Common myeloid progenitor, CD34-positive (primary cell): ENCODE measurements at regions of chr17 and their contacts with region 1.

Region 1: GRCh38 chr17:29617125-29617480 is 5.6 kb downstream of the CORO6 start:
- DNase-seq: peak; percentile 89 to 94 (median 94)
- H3K4me3 ChIP-seq: peak overlapping the region in 6 of 7 experiments; percentile 9 to 82 (median 58)
- H3K27ac ChIP-seq: no peak overlapping the region
- H3K4me1 ChIP-seq: peaks cover 2 to 66% (median 59%) of the 10 kb centered on the region in 4 experiments
- H3K27me3 ChIP-seq: peaks cover 0 to 32% (median 18%) of the 10 kb centered on the region in 5 experiments

Region 2: DNA sequence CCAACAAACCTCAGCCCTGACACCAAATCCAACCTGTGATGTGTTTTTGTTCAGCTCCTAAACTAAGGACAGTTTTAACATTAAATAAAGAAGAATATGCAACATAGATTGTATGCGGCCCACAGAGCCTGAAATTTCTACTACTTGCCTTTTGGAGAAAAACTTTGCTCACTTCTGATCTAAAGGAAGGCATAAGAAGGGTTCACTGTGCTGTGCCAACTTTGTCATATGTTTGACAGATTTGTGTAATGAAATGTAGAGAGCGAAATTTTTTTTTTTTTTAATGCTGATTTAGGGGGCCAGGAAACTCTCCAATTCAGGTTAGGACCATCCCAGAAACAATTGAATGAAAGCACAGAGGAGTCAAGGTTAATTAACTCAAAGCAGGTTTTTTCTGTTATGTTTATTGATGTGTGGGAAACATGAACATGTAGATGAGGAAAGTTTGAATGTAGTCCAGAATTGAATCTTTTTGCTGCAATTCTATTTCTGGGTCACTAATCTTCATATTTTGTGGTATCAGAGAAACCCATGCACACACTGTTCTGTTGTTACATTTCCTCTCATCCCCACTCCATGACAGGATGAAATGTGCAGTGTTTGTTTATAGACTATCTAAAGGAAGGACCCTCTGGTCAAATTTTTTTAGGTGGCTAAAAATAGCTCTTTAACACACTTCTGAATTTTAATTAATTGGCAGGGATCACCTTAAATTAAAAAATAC is 155.5 kb before region 1 on chr17:
- CTCF ChIA-PET with region 1: no interaction called
- POLR2A ChIA-PET with region 1: no interaction called
- DNase-seq: peak in 1 of 3 donors; percentile 13
- H3K4me3 ChIP-seq: no peak overlapping the region
- H3K27ac ChIP-seq: peak overlapping the region in 1 of 2 experiments; percentile 38
- H3K4me1 ChIP-seq: peaks cover 0 to 13% (median 3%) of the 10 kb centered on the region in 4 experiments
- H3K27me3 ChIP-seq: no peaks in the 10 kb centered on the region

Region 3: GRCh38 chr17:29579866-29580771 is 37.0 kb before region 1 on chr17:
- CTCF ChIA-PET with region 1: interaction called, 179 read pairs
- POLR2A ChIA-PET with region 1: interaction called, 3 read pairs
- DNase-seq: peak; percentile 89 to 96 (median 95)
- H3K4me3 ChIP-seq: no peak overlapping the region
- H3K27ac ChIP-seq: no peak overlapping the region
- H3K4me1 ChIP-seq: peaks cover 0 to 18% (median 13%) of the 10 kb centered on the region in 4 experiments
- H3K27me3 ChIP-seq: no peaks in the 10 kb centered on the region

Region 4: GRCh38 chr17:29597361-29598172 is 19.5 kb before region 1 on chr17:
- CTCF ChIA-PET with region 1: interaction called, 71 read pairs
- POLR2A ChIA-PET with region 1: interaction called, 4 read pairs
- DNase-seq: no peak
- H3K4me3 ChIP-seq: no peak overlapping the region
- H3K27ac ChIP-seq: no peak overlapping the region
- H3K4me1 ChIP-seq: peaks cover 0 to 19% (median 17%) of the 10 kb centered on the region in 4 experiments
- H3K27me3 ChIP-seq: peaks cover 0 to 1% (median 0%) of the 10 kb centered on the region in 5 experiments

Region 5: GRCh38 chr17:29640413-29640812 is 23.3 kb after region 1 on chr17:
- CTCF ChIA-PET with region 1: interaction called, 32 read pairs
- POLR2A ChIA-PET with region 1: interaction called, 3 read pairs
- DNase-seq: peak in 2 of 3 donors; percentile 32 to 51
- H3K4me3 ChIP-seq: no peak overlapping the region
- H3K27ac ChIP-seq: peak overlapping the region in 1 of 2 experiments; percentile 57
- H3K4me1 ChIP-seq: peaks cover 14 to 50% (median 44%) of the 10 kb centered on the region in 4 experiments
- H3K27me3 ChIP-seq: no peaks in the 10 kb centered on the region

Region 6: DNA sequence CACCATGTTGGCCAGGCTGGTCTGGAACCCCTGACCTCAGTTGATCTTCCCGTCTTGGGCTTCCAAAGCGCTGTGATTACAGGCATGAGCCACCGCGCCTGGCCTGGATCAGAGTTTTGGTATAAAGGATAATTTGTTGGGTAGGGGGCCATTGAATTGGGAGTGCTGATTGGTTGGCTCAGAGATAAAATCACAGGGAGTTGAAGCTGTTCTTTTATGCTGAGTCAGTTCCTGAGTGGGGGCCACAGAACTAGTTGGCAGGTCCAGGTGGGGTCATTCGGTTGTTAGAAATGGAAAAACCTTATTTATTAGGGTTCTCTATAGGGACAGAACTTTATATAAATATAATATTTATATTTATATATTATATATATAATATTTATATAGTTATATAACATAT is 165.8 kb after region 1 on chr17:
- CTCF ChIA-PET with region 1: interaction called, 19 read pairs
- POLR2A ChIA-PET with region 1: no interaction called
- DNase-seq: peak in 2 of 3 donors; percentile 29 to 35
- H3K4me3 ChIP-seq: no peak overlapping the region
- H3K27ac ChIP-seq: no peak overlapping the region
- H3K4me1 ChIP-seq: peaks cover 0 to 14% (median 7%) of the 10 kb centered on the region in 4 experiments
- H3K27me3 ChIP-seq: no peaks in the 10 kb centered on the region